Endothelial cell of umbilical vein (primary cell): ENCODE measurements at regions of chr20 and their contacts with region 1.

Region 1: DNA sequence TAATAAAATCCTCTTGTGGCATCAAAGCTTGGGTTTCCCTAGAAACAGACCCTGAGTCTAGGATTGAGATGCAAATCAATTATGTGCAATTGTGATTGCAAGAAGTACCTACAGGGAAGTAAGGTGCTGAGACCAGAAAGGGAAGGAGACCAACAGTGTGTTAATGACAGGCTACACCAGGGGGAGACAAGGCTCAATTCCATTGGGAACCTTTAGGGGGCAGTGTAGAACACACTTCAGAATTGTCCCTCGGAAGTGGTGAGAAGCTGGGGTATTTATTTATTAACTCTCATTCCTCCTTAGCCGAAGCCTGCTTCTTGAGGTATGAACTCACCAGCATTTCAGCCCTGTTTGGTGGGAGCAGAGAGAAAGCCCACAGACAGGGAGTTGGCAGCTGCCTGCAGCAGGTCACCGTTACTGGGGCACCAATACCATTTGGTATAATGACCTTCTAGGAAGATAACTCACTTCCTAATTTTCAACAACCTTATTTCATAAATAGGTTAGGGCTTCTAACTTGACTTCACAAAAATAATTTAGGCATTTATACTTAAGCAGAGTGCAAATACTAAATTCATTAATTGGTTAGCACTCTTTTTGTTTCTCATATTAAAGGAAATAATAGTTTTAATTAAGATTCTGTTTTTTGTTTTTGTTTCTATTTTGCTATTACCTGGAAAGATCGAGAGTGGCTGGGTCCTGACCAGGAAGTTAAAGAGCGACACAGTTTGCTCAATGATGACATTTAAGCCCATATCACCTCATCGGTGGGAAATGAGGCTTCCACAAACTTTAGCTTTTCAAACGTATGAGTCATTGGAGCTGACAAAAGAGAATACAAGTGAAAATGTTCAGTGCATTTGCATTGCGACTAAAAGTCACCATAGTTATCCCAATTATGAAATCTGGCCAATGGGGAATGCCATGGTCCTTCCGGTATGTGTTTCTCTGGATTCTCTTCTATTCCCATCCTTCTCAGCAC is 94.8 kb downstream of the BTBD3 start:
- DNase-seq: peak; percentile 70
- H3K4me3 ChIP-seq: no peak overlapping the region
- H3K27ac ChIP-seq: no peak overlapping the region
- H3K4me1 ChIP-seq: peaks cover 2% of the 10 kb centered on the region
- H3K27me3 ChIP-seq: no peaks in the 10 kb centered on the region
- CTCF ChIP-seq: peak; percentile 94 to 100
- POLR2A ChIP-seq: no peak

Region 2: GRCh38 chr20:11676630-11677284 is 335.8 kb before region 1 on chr20:
- CTCF ChIA-PET with region 1: interaction called, 5 read pairs
- POLR2A ChIA-PET with region 1: no interaction called
- dilution Hi-C with region 1: no loop called
- intact Hi-C with region 1: loop called (anchors 1 kb)
- DNase-seq: peak; percentile 51
- H3K4me3 ChIP-seq: no peak overlapping the region
- H3K27ac ChIP-seq: no peak overlapping the region
- H3K4me1 ChIP-seq: no peaks in the 10 kb centered on the region
- H3K27me3 ChIP-seq: peaks cover 0 to 5% of the 10 kb centered on the region in 2 experiments
- CTCF ChIP-seq: peak; percentile 70 to 75
- POLR2A ChIP-seq: no peak

Region 3: GRCh38 chr20:11958855-11959254 is 53.7 kb before region 1 on chr20:
- CTCF ChIA-PET with region 1: no interaction called
- POLR2A ChIA-PET with region 1: no interaction called
- dilution Hi-C with region 1: no loop called
- intact Hi-C with region 1: no loop called
- DNase-seq: no peak
- H3K4me3 ChIP-seq: no peak overlapping the region
- H3K27ac ChIP-seq: no peak overlapping the region
- H3K4me1 ChIP-seq: no peaks in the 10 kb centered on the region
- H3K27me3 ChIP-seq: no peaks in the 10 kb centered on the region
- CTCF ChIP-seq: no peak
- POLR2A ChIP-seq: no peak

Region 4: DNA sequence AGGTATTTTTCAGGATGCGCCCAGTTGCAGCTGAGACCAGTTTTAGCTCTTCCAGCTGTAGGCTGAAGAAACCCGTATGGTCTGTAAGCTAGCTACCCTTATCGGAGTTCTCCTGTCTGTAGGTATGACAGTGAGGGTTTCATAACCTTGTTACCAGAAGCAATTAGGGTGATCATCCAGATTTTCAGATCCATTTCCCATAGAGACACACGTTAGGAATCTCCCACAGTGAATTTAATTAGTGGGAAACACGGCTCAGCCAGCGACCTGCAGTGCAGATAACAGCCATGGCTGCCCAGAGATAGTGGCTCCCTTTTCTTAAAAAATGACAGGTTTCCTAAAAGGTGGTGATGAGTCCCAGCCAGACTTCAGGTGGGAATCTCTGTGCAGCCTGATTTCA is 16.2 kb after region 1 on chr20:
- CTCF ChIA-PET with region 1: interaction called, 19 read pairs
- POLR2A ChIA-PET with region 1: no interaction called
- dilution Hi-C with region 1: no loop called
- intact Hi-C with region 1: no loop called
- DNase-seq: no peak
- H3K4me3 ChIP-seq: no peak overlapping the region
- H3K27ac ChIP-seq: no peak overlapping the region
- H3K4me1 ChIP-seq: no peaks in the 10 kb centered on the region
- H3K27me3 ChIP-seq: no peaks in the 10 kb centered on the region
- CTCF ChIP-seq: no peak
- POLR2A ChIP-seq: no peak

Region 5: DNA sequence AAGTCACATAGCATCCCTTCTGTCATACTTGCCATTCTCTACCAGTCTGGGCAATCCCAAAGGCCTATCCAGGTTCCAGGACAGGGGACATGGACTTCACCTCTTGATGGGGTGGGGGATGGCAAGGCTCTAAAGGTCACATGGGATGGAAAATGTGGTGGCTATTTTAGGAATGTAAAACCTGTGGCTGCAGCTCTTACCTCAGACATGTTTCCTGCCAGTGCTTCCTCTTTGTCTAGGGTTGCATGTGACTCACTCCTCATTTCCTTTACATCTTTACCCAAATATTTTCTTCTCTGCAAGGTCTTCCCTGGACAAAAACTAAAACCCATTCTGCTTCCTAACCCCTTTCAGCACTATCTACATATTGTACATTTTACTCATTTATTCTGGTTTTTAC is 40.8 kb after region 1 on chr20:
- CTCF ChIA-PET with region 1: interaction called, 6 read pairs
- POLR2A ChIA-PET with region 1: no interaction called
- dilution Hi-C with region 1: no loop called
- intact Hi-C with region 1: loop called (anchors 2 kb)
- DNase-seq: peak; percentile 90
- H3K4me3 ChIP-seq: no peak overlapping the region
- H3K27ac ChIP-seq: peak overlapping the region; percentile 90
- H3K4me1 ChIP-seq: peaks cover 34% of the 10 kb centered on the region
- H3K27me3 ChIP-seq: no peaks in the 10 kb centered on the region
- CTCF ChIP-seq: no peak
- POLR2A ChIP-seq: no peak

Region 6: DNA sequence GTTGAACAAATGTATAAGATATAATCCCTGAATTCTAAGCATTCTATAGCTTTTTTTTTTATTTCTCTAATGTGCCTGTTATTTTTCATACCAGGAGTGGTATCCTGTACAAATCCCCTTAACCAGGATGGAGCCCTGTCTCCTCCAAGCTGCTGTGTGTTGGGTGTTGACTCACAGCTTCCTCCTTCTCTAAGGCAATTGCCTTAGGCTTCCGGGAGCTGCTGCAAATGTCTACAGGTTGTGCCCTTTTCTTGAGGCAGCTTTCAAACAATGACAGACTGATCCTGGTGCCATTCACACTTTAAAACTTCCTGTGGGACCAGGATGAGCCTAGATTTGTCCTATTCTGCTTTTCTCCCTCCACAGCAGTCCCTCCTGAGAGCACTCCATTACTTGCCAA is 78.4 kb after region 1 on chr20:
- CTCF ChIA-PET with region 1: interaction called, 15 read pairs
- POLR2A ChIA-PET with region 1: no interaction called
- dilution Hi-C with region 1: no loop called
- intact Hi-C with region 1: no loop called
- DNase-seq: peak; percentile 54
- H3K4me3 ChIP-seq: no peak overlapping the region
- H3K27ac ChIP-seq: no peak overlapping the region
- H3K4me1 ChIP-seq: peaks cover 11% of the 10 kb centered on the region
- H3K27me3 ChIP-seq: no peaks in the 10 kb centered on the region
- CTCF ChIP-seq: no peak
- POLR2A ChIP-seq: no peak

Region 7: GRCh38 chr20:12207875-12208274 is 195.3 kb after region 1 on chr20:
- CTCF ChIA-PET with region 1: interaction called, 92 read pairs
- POLR2A ChIA-PET with region 1: no interaction called
- dilution Hi-C with region 1: no loop called
- intact Hi-C with region 1: loop called (anchors 1 kb)
- DNase-seq: peak; percentile 49
- H3K4me3 ChIP-seq: no peak overlapping the region
- H3K27ac ChIP-seq: no peak overlapping the region
- H3K4me1 ChIP-seq: no peaks in the 10 kb centered on the region
- H3K27me3 ChIP-seq: no peaks in the 10 kb centered on the region
- CTCF ChIP-seq: peak; percentile 62 to 63
- POLR2A ChIP-seq: no peak